ENCODE measurements at regions of chr3 and their contacts with region 1.

Region 1: GRCh38 chr3:106862067-106862466 is 515.2 kb upstream of the CCDC54 start:
- DNase-seq: peak; percentile 79
- H3K4me3 ChIP-seq: no peak overlapping the region
- H3K27ac ChIP-seq: peak overlapping the region; percentile 2
- H3K4me1 ChIP-seq: peaks cover 13% of the 10 kb centered on the region
- H3K27me3 ChIP-seq: no peaks in the 10 kb centered on the region
- CTCF ChIP-seq: peak; percentile 29 to 41
- POLR2A ChIP-seq: no peak

Region 2: DNA sequence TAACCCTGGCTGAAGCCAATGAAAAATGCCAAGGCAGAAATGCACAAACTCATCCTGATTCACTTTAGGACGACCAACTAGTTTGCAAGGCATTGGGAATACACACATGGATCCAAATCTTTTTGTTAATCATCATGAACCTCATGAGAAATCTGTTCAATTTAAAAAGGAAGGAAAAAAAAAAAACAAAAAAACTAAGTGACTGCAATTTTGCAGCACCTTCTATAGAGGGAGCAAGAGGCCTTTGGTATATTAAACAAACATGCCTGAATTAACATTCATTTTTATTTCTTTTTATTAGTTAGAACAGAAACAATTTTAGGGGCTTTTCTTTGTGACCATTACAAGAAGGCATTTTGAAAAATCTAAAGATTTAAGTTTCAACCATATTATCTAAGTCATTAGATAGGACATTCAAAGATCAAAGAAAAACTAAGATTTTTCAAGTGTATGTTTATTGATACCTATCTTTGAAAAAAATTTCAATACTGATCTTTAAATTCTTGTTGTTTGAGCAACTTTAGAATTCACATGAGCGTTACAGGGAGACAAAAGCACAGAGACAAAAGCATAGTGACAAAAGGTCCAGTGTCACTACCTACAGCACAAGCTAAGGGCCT is 1175.7 kb before region 1 on chr3:
- CTCF ChIA-PET with region 1: no interaction called
- POLR2A ChIA-PET with region 1: no interaction called
- dilution Hi-C with region 1: no loop called
- intact Hi-C with region 1: loop called (anchors 1 kb)
- DNase-seq: peak; percentile 24
- H3K4me3 ChIP-seq: no peak overlapping the region
- H3K27ac ChIP-seq: no peak overlapping the region
- H3K4me1 ChIP-seq: no peaks in the 10 kb centered on the region
- H3K27me3 ChIP-seq: no peaks in the 10 kb centered on the region
- CTCF ChIP-seq: peak; percentile 58
- POLR2A ChIP-seq: no peak

Region 3: DNA sequence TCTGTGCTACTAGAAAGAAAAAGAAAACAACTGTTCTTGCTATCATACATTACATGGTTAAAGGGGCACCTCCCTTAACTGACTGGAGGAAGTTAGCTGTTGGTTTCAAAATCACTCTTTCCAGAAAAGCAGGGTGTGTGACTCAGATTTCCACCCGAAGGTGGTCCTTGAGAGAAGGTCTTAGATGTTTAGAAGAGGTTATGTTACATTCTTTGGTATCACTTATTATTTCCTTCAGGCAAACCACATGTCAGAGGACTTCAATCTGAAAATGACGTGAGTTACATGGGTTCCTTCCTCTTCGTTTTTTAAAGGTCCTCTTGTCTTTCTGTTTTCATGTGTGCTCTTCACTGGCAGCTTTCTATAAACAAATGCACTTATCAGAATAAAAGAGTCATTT is 685.3 kb before region 1 on chr3:
- CTCF ChIA-PET with region 1: no interaction called
- POLR2A ChIA-PET with region 1: no interaction called
- dilution Hi-C with region 1: no loop called
- intact Hi-C with region 1: no loop called
- DNase-seq: peak; percentile 5
- H3K4me3 ChIP-seq: no peak overlapping the region
- H3K27ac ChIP-seq: no peak overlapping the region
- H3K4me1 ChIP-seq: no peaks in the 10 kb centered on the region
- H3K27me3 ChIP-seq: no peaks in the 10 kb centered on the region
- CTCF ChIP-seq: no peak
- POLR2A ChIP-seq: no peak

Region 4: GRCh38 chr3:106206146-106206545 is 655.9 kb before region 1 on chr3:
- CTCF ChIA-PET with region 1: interaction called, 3 read pairs
- POLR2A ChIA-PET with region 1: no interaction called
- dilution Hi-C with region 1: no loop called
- intact Hi-C with region 1: loop called (anchors 10 kb)
- DNase-seq: peak; percentile 83
- H3K4me3 ChIP-seq: peak overlapping the region in 1 of 3 experiments; percentile 35
- H3K27ac ChIP-seq: peak overlapping the region; percentile 32
- H3K4me1 ChIP-seq: peaks cover 16% of the 10 kb centered on the region
- H3K27me3 ChIP-seq: no peaks in the 10 kb centered on the region
- CTCF ChIP-seq: no peak
- POLR2A ChIP-seq: no peak

Region 5: GRCh38 chr3:106629215-106629832 is 232.7 kb before region 1 on chr3:
- CTCF ChIA-PET with region 1: interaction called, 7 read pairs
- POLR2A ChIA-PET with region 1: no interaction called
- dilution Hi-C with region 1: no loop called
- intact Hi-C with region 1: loop called (anchors 5 kb)
- DNase-seq: peak; percentile 9
- H3K4me3 ChIP-seq: no peak overlapping the region
- H3K27ac ChIP-seq: no peak overlapping the region
- H3K4me1 ChIP-seq: peaks cover 15% of the 10 kb centered on the region
- H3K27me3 ChIP-seq: no peaks in the 10 kb centered on the region
- CTCF ChIP-seq: no peak
- POLR2A ChIP-seq: no peak

Region 6: DNA sequence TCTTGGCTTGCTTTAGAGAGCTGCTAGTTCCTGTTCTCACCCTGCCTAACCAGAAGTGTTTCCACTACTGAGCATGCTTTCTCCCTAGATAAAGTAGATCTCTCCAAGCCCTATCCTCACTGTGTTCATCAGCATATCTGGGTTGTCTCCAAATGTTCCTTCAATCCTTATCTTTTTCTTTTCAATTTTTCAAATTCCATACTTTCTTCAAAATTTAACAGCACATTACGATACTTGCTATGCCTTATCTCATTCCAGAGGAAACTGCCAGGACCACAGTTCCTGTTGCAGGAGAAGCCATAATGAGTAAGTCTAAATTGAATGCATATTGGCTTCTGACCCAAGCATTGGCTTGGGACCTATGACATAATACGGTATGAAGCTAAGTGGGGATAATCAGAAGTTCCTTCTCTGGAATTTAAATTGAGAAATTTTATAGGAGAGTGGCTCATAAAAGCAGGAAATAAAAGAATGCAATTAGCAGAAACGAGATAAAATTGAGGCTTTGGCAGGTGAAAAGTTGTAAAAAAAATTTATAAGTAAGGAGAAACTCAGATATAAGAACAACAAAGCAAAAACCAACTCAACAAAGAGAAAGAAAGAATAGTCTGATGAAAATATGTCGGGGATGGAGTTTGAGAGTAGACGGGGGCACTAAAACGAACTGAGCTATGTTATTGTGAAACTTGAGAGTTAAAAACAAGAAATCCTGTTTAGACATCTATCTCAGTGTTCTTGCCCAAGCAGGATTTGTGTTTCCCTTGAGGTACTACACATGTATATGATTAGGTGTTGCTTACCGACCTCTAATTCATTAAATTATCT is 116.5 kb before region 1 on chr3:
- CTCF ChIA-PET with region 1: interaction called, 16 read pairs
- POLR2A ChIA-PET with region 1: no interaction called
- dilution Hi-C with region 1: no loop called
- intact Hi-C with region 1: loop called (anchors 1 kb)
- DNase-seq: peak; percentile 96
- H3K4me3 ChIP-seq: peak overlapping the region in 1 of 3 experiments; percentile 52
- H3K27ac ChIP-seq: peak overlapping the region; percentile 92
- H3K4me1 ChIP-seq: peaks cover 36% of the 10 kb centered on the region
- H3K27me3 ChIP-seq: no peaks in the 10 kb centered on the region
- CTCF ChIP-seq: no peak
- POLR2A ChIP-seq: no peak

Region 7: DNA sequence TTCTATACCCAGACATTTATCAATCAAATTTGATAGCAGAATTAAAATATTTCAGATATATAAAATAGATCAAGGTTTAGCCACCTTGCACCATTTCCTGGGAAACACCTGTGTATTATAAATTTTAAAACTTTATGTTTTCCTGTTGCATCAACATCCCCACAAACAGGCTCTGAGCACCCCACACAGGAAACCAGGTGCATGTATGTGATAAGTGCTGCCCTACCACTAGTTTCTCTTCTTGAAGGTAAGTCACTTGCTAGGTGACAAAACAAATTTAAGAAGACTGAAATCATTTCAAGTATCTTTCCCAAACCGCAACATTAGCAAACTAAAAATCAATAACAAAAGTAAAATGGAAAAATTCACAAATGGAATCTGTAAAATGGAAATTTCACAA is 19.1 kb after region 1 on chr3:
- CTCF ChIA-PET with region 1: no interaction called
- POLR2A ChIA-PET with region 1: no interaction called
- dilution Hi-C with region 1: no loop called
- intact Hi-C with region 1: no loop called
- DNase-seq: no peak
- H3K4me3 ChIP-seq: no peak overlapping the region
- H3K27ac ChIP-seq: no peak overlapping the region
- H3K4me1 ChIP-seq: no peaks in the 10 kb centered on the region
- H3K27me3 ChIP-seq: no peaks in the 10 kb centered on the region
- CTCF ChIP-seq: no peak
- POLR2A ChIP-seq: no peak

Region 8: GRCh38 chr3:107308716-107309115 is 446.6 kb after region 1 on chr3:
- CTCF ChIA-PET with region 1: no interaction called
- POLR2A ChIA-PET with region 1: no interaction called
- dilution Hi-C with region 1: no loop called
- intact Hi-C with region 1: no loop called
- DNase-seq: no peak
- H3K4me3 ChIP-seq: no peak overlapping the region
- H3K27ac ChIP-seq: no peak overlapping the region
- H3K4me1 ChIP-seq: no peaks in the 10 kb centered on the region
- H3K27me3 ChIP-seq: no peaks in the 10 kb centered on the region
- CTCF ChIP-seq: no peak
- POLR2A ChIP-seq: no peak

Measured in endothelial cell of umbilical vein (primary cell).